CD8-positive, alpha-beta T cell (primary cell): ENCODE measurements at regions of chr5 and their contacts with region 1.

Region 1: DNA sequence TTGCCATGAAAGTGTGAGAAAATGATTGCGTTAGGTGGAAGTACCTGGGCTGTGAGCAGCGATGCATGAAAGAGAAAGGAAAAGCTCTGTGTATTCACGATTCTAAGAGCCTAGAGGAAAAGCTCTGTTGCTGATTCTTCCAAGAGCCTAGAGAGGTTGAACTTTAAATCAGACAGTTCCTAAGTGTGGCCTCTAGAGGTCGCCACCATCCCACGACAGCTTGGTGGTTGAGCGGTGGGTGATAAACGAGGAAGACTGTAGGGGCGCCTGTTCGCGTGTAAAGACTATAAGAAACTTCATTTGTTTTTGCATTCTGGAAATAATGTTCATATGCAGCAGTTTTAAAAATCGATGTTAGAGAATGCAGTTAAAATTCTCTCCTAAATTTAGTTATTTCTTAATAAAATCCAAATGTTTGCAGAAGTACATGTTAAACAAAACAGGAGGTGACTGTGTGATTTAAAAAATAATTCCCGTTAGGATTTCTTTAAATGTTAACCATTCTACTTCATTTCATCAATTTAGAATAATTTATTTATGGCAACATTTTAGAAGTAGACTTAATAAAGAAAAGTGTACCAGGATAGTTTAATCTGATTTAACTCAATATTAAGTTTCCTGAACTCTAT is 107.7 kb downstream of the TENT4A start:
- DNase-seq: peak in 5 of 9 experiments; percentile 12 to 49 (median 31)
- ATAC-seq: peak; percentile 36
- H3K4me3 ChIP-seq: no peak overlapping the region
- H3K4me3 Mint-ChIP-seq: no peak overlapping the region
- H3K27ac ChIP-seq: no peak overlapping the region
- H3K27ac Mint-ChIP-seq: no peak overlapping the region
- H3K4me1 ChIP-seq: no peaks in the 10 kb centered on the region
- H3K4me1 Mint-ChIP-seq: no peaks in the 10 kb centered on the region
- H3K27me3 ChIP-seq: peaks cover 0 to 3% of the 10 kb centered on the region in 2 experiments
- H3K27me3 Mint-ChIP-seq: peaks cover 14% of the 10 kb centered on the region
- CTCF ChIP-seq: peak; percentile 66

Region 2: GRCh38 chr5:6810641-6811405 is 10.1 kb before region 1 on chr5:
- CTCF ChIA-PET with region 1: no interaction called
- POLR2A ChIA-PET with region 1: no interaction called
- intact Hi-C with region 1: no loop called
- DNase-seq: no peak
- ATAC-seq: no peak
- H3K4me3 ChIP-seq: no peak overlapping the region
- H3K4me3 Mint-ChIP-seq: no peak overlapping the region
- H3K27ac ChIP-seq: no peak overlapping the region
- H3K27ac Mint-ChIP-seq: no peak overlapping the region
- H3K4me1 ChIP-seq: no peaks in the 10 kb centered on the region
- H3K4me1 Mint-ChIP-seq: no peaks in the 10 kb centered on the region
- H3K27me3 ChIP-seq: no peaks in the 10 kb centered on the region
- H3K27me3 Mint-ChIP-seq: peaks cover 3% of the 10 kb centered on the region
- CTCF ChIP-seq: no peak

Region 3: GRCh38 chr5:7815892-7816534 is 995.0 kb after region 1 on chr5:
- CTCF ChIA-PET with region 1: no interaction called
- POLR2A ChIA-PET with region 1: no interaction called
- intact Hi-C with region 1: loop called in 1 of 2 experiments (anchors 10 kb)
- DNase-seq: peak; percentile 21 to 69 (median 49)
- ATAC-seq: peak; percentile 40
- H3K4me3 ChIP-seq: no peak overlapping the region
- H3K4me3 Mint-ChIP-seq: no peak overlapping the region
- H3K27ac ChIP-seq: no peak overlapping the region
- H3K27ac Mint-ChIP-seq: no peak overlapping the region
- H3K4me1 ChIP-seq: no peaks in the 10 kb centered on the region
- H3K4me1 Mint-ChIP-seq: no peaks in the 10 kb centered on the region
- H3K27me3 ChIP-seq: peaks cover 0 to 2% of the 10 kb centered on the region in 2 experiments
- H3K27me3 Mint-ChIP-seq: peaks cover 34% of the 10 kb centered on the region
- CTCF ChIP-seq: peak; percentile 49